AG04450 (cell line): ENCODE measurements at regions of chr3 and their contacts with region 1.

Region 1: DNA sequence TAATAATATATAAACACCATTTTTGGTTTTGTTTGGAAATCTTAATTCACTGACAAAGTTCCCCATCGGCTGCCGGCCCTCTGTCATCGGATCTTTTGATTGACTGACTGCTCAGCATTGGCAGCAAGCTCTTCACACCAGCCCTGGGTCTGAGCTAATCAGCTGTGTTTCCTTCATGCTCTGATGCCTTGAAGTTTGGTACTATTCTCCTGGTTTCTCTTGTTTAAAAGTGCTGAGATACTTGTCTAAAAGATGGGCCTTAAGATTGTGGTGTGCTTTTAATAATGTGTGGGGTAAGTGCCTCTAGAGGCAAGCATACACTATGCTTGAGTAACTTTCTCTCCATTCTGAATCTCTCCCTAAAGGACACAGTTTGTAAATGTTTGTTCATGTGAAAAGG is 415.5 kb upstream of the TPRG1 start:
- DNase-seq: no peak
- H3K4me3 ChIP-seq: no peak overlapping the region
- H3K27ac ChIP-seq: no peak overlapping the region
- H3K27me3 ChIP-seq: no peaks in the 10 kb centered on the region
- CTCF ChIP-seq: no peak

Region 2: GRCh38 chr3:188421836-188422540 is 334.3 kb before region 1 on chr3:
- CTCF ChIA-PET with region 1: interaction called, 10 read pairs
- POLR2A ChIA-PET with region 1: no interaction called
- DNase-seq: no peak
- H3K4me3 ChIP-seq: no peak overlapping the region
- H3K27ac ChIP-seq: peak overlapping the region; percentile 12
- H3K27me3 ChIP-seq: no peaks in the 10 kb centered on the region
- CTCF ChIP-seq: no peak